ENCODE measurements at regions of chr10 and their contacts with region 1.

Region 1: DNA sequence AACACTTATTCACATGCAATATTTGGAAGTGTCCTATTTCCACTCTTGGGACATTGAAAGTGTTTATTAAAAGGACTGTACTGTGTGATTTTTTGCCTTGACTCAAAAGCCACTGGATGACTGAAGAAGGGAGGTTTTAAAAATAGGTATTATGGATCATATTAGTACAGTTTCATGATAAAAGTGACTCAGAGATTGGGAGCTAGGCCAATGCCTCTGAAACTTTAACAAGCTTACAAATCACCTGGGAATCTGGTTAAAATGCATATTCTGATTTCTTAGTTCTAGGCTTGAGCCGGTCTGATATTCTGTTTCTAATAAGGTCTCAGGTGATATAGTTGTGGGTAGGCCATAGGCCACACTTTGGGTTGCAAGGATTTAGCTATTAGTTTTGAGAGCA is 191.2 kb downstream of the PLXDC2 start:
- DNase-seq: no peak
- ATAC-seq: no peak

Region 2: GRCh38 chr10:19862811-19863515 is 144.5 kb before region 1 on chr10:
- intact Hi-C with region 1: no loop called
- DNase-seq: no peak
- ATAC-seq: no peak

Region 3: DNA sequence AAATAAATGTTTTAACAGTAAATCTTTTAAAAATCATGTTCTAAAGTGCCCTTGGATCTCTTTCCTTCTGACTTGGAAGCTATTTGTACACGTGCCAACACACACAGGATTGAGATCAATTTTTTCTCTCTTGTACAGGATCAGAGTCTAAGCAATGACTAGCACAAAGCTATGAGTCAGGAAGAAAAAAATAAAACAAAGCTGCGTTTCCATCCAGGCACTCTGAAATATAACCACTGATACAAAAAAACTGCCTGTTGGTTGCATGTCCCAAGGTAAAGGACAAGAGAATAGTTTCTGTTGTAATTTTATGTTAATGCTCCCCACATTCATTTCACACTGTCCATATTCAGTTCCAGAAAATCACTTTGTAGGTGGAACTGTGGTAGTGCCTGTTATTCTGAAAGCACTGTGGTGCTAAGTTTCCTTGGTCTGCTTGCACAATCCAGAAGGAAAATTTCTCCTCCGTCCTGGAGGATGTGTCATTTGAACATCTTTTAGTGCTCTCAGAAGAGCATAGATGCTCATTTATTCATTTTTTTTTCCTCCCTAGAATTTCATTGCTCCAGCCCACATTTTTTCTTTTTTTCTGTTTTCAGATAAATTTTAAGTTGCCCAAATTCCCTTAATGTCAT is 77.8 kb before region 1 on chr10:
- intact Hi-C with region 1: loop called (anchors 5 kb)
- DNase-seq: no peak
- ATAC-seq: no peak

Measured in Right ventricle myocardium inferior (tissue), 1 donor.